ENCODE measurements at regions of chr9 and their contacts with region 1.

Region 1: GRCh38 chr9:98929071-98929470 is 14.6 kb upstream of the COL15A1 start:
- DNase-seq: no peak
- ATAC-seq: no peak
- H3K4me3 ChIP-seq: no peak overlapping the region
- H3K27ac ChIP-seq: no peak overlapping the region
- H3K4me1 ChIP-seq: peaks cover 41 to 48% of the 10 kb centered on the region in 2 experiments
- H3K27me3 ChIP-seq: no peaks in the 10 kb centered on the region
- CTCF ChIP-seq: no peak
- EP300 ChIP-seq: no peak
- POLR2A ChIP-seq: no peak
- RAD21 ChIP-seq: no peak

Region 2: GRCh38 chr9:98867429-98868168 is 61.5 kb before region 1 on chr9:
- CTCF ChIA-PET with region 1: no interaction called
- POLR2A ChIA-PET with region 1: interaction called, 3 read pairs
- in situ Hi-C with region 1: no loop called
- intact Hi-C with region 1: loop called (anchors 1 kb)
- DNase-seq: peak; percentile 43 to 86 (median 62)
- ATAC-seq: peak; percentile 97
- H3K4me3 ChIP-seq: no peak overlapping the region
- H3K27ac ChIP-seq: peak overlapping the region; percentile 82
- H3K4me1 ChIP-seq: peaks cover 0 to 34% of the 10 kb centered on the region in 2 experiments; a peak in 3 of 5 replicates
- H3K27me3 ChIP-seq: no peaks in the 10 kb centered on the region
- CTCF ChIP-seq: no peak
- EP300 ChIP-seq: peak; percentile 98
- POLR2A ChIP-seq: no peak
- RAD21 ChIP-seq: peak; percentile 42 to 66

Region 3: GRCh38 chr9:98916660-98917059 is 12.4 kb before region 1 on chr9:
- CTCF ChIA-PET with region 1: no interaction called
- POLR2A ChIA-PET with region 1: interaction called, 12 read pairs
- in situ Hi-C with region 1: no loop called
- intact Hi-C with region 1: no loop called
- DNase-seq: peak; percentile 79 to 88 (median 82)
- ATAC-seq: peak; percentile 98
- H3K4me3 ChIP-seq: no peak overlapping the region
- H3K27ac ChIP-seq: peak overlapping the region; percentile 44
- H3K4me1 ChIP-seq: peaks cover 16 to 21% of the 10 kb centered on the region in 2 experiments
- H3K27me3 ChIP-seq: no peaks in the 10 kb centered on the region
- CTCF ChIP-seq: peak; percentile 15 to 25 (median 23); a peak in 1 of 6 replicates
- EP300 ChIP-seq: 0 out of 2 replicates have a peak, but pooled peaks have one; percentile 7
- POLR2A ChIP-seq: no peak
- RAD21 ChIP-seq: peak in 1 of 2 experiments; percentile 34; a peak in 2 of 4 replicates

Region 4: GRCh38 chr9:98944057-98944733 is 15.1 kb after region 1 on chr9:
- CTCF ChIA-PET with region 1: no interaction called
- POLR2A ChIA-PET with region 1: interaction called, 21 read pairs
- in situ Hi-C with region 1: no loop called
- intact Hi-C with region 1: no loop called
- DNase-seq: no peak
- ATAC-seq: no peak
- H3K4me3 ChIP-seq: peak overlapping the region; percentile 38
- H3K27ac ChIP-seq: no peak overlapping the region
- H3K4me1 ChIP-seq: peaks cover 13 to 21% of the 10 kb centered on the region in 2 experiments
- H3K27me3 ChIP-seq: peaks cover 0 to 17% of the 10 kb centered on the region in 2 experiments; a peak in 3 of 5 replicates
- CTCF ChIP-seq: no peak
- EP300 ChIP-seq: no peak
- POLR2A ChIP-seq: no peak
- RAD21 ChIP-seq: no peak

Region 5: GRCh38 chr9:99071313-99072039 is 142.4 kb after region 1 on chr9:
- CTCF ChIA-PET with region 1: no interaction called
- POLR2A ChIA-PET with region 1: no interaction called
- in situ Hi-C with region 1: no loop called
- intact Hi-C with region 1: no loop called
- DNase-seq: no peak
- ATAC-seq: no peak
- H3K4me3 ChIP-seq: no peak overlapping the region
- H3K27ac ChIP-seq: peak overlapping the region; percentile 66
- H3K4me1 ChIP-seq: peaks cover 27 to 55% of the 10 kb centered on the region in 2 experiments
- H3K27me3 ChIP-seq: no peaks in the 10 kb centered on the region
- CTCF ChIP-seq: no peak
- EP300 ChIP-seq: no peak
- POLR2A ChIP-seq: no peak
- RAD21 ChIP-seq: no peak